Activated CD4-positive, alpha-beta memory T cell treated with anti-CD3 and anti-CD28 coated beads, Interleukin-2, amount 10 ng/mL, durations not matched to agents 7 days and 5 days (primary cell): ENCODE measurements at regions of chr16 and their contacts with region 1.

Region 1: GRCh38 chr16:81623363-81624102 is 155.6 kb upstream of the PLCG2 start:
- DNase-seq: peak; percentile 69
- H3K4me3 Mint-ChIP-seq: no peak overlapping the region
- H3K27ac Mint-ChIP-seq: peak overlapping the region; percentile 12
- H3K4me1 Mint-ChIP-seq: peaks cover 33% of the 10 kb centered on the region
- H3K27me3 Mint-ChIP-seq: no peaks in the 10 kb centered on the region

Region 2: DNA sequence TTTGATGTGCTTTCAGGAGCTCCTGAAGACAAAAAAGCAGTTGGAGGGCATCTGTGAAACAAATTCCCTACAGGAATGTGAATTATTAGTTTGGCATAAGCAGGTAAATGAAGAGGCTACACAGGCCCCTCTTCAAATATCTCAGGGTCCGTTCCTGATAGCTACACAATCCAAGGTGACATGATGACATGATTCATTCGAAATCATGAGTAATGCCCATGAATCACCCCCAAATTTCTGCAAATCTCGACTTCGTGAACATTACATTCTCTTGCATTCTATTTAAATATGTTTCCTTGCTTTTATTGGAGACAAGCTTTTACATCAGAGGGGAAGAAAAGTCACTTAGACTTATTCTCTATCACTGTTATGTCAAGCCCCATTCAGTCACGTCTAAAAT is 286.4 kb before region 1 on chr16:
- CTCF ChIA-PET with region 1: no interaction called
- POLR2A ChIA-PET with region 1: no interaction called
- DNase-seq: no peak
- H3K4me3 Mint-ChIP-seq: no peak overlapping the region
- H3K27ac Mint-ChIP-seq: no peak overlapping the region
- H3K4me1 Mint-ChIP-seq: peaks cover 8% of the 10 kb centered on the region
- H3K27me3 Mint-ChIP-seq: no peaks in the 10 kb centered on the region

Region 3: GRCh38 chr16:81403616-81404373 is 219.7 kb before region 1 on chr16:
- CTCF ChIA-PET with region 1: interaction called, 22 read pairs
- POLR2A ChIA-PET with region 1: no interaction called
- DNase-seq: peak; percentile 83
- H3K4me3 Mint-ChIP-seq: no peak overlapping the region
- H3K27ac Mint-ChIP-seq: no peak overlapping the region
- H3K4me1 Mint-ChIP-seq: peaks cover 4% of the 10 kb centered on the region
- H3K27me3 Mint-ChIP-seq: peaks cover 4% of the 10 kb centered on the region

Region 4: GRCh38 chr16:81696961-81697615 is 73.6 kb after region 1 on chr16:
- CTCF ChIA-PET with region 1: interaction called, 30 read pairs
- POLR2A ChIA-PET with region 1: no interaction called
- DNase-seq: peak; percentile 61
- H3K4me3 Mint-ChIP-seq: no peak overlapping the region
- H3K27ac Mint-ChIP-seq: no peak overlapping the region
- H3K4me1 Mint-ChIP-seq: no peaks in the 10 kb centered on the region
- H3K27me3 Mint-ChIP-seq: no peaks in the 10 kb centered on the region

Region 5: GRCh38 chr16:81717662-81718189 is 94.2 kb after region 1 on chr16:
- CTCF ChIA-PET with region 1: interaction called, 20 read pairs
- POLR2A ChIA-PET with region 1: interaction called, 3 read pairs
- DNase-seq: peak; percentile 25
- H3K4me3 Mint-ChIP-seq: peak overlapping the region; percentile 61
- H3K27ac Mint-ChIP-seq: peak overlapping the region; percentile 73
- H3K4me1 Mint-ChIP-seq: peaks cover 49% of the 10 kb centered on the region
- H3K27me3 Mint-ChIP-seq: no peaks in the 10 kb centered on the region

Region 6: GRCh38 chr16:81730090-81731051 is 106.8 kb after region 1 on chr16:
- CTCF ChIA-PET with region 1: interaction called, 17 read pairs
- POLR2A ChIA-PET with region 1: no interaction called
- DNase-seq: peak; percentile 64
- H3K4me3 Mint-ChIP-seq: peak overlapping the region; percentile 68
- H3K27ac Mint-ChIP-seq: peak overlapping the region; percentile 86
- H3K4me1 Mint-ChIP-seq: peaks cover 25% of the 10 kb centered on the region
- H3K27me3 Mint-ChIP-seq: no peaks in the 10 kb centered on the region